Activated CD4-positive, alpha-beta memory T cell treated with anti-CD3 and anti-CD28 coated beads, Interleukin-2, amount 10 ng/mL, durations not matched to agents 7 days and 5 days (primary cell): ENCODE measurements at regions of chr20 and their contacts with region 1.

Region 1: DNA sequence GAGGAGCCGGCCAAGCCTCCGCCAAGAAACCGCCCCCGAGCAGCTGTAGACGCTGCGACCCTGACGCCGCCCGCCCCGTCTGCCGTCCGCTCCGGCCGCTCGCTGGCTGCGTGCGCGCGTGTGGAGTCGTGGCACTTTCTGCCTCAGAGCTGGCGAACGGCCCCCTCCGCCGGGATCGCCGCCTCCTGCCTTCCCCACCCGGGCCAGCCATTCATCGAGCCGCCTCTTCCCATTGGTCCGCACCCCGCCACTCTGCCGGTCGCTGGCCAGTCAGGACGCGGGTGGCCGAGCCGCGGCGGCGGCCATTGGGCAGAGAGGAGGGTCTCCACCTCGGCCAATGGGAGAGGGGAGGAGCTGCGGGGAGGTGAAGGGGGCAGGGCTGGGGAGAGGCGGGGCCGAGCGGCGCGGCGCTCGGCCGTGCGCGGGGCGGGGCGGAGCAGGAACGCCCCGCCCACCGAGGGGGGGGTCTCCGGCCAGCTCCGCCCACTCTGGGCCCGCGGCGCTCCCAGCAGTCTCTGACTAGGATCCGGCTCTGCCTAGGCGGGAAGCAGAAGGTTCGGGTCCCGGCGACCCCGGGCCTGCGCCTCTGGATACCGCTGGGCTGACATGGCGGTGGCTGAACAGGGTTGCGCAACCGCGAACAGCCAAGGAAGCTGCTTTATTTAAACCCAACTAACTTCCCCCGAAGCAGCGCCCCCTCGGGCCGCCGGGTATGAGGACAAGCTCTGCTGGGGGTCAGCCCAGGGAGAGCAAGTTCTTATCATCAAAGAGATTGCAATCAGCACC is at the start of gene RRBP1:
- DNase-seq: peak; percentile 98
- H3K4me3 Mint-ChIP-seq: peak within 1 kb of the TSS; percentile 84
- H3K27ac Mint-ChIP-seq: peak within 1 kb of the TSS; percentile 83
- H3K4me1 Mint-ChIP-seq: peaks cover 34% of the 10 kb centered on the region
- H3K27me3 Mint-ChIP-seq: peaks cover 41% of the 10 kb centered on the region
- total RNA-seq, gene RRBP1: 82.3 to 85.7 TPM

Region 2: DNA sequence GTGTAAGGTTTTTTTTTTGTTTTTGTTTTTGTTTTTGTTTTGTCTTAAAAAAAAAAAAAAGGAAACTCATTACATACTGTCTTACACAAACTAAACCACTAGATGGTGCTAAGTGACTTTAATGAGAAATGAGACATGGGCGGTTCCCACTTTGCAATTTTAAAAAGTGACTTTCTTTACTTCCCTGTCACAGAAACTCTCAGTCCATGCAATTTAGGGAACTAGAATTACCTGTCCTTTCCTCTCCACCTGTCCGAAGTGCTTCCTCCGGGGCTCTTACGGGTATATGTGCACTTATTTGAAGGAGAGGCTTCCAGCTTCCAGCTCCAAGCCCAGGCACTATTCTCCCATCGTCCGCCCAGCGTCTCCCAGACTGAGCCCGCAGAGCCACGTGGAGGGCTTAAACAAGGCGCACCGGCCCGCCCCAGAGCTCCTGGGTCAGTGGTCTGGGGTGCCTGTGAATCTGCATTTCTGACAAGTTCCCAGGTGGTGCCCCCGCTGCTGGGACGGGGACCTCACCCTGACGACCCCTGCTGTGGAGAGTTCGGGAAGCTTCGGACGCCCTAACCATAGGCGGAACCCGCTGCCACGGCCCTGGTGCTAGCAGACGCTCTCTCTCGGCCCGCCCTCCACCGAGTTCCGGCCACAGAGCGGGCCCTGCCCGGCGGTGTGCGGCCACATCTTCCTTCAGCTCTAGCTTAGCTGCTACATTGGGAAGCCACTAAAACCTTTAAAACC is 177.2 kb before region 1 on chr20:
- CTCF ChIA-PET with region 1: interaction called, 29 read pairs
- POLR2A ChIA-PET with region 1: interaction called, 22 read pairs
- DNase-seq: no peak
- H3K4me3 Mint-ChIP-seq: peak overlapping the region; percentile 79
- H3K27ac Mint-ChIP-seq: peak overlapping the region; percentile 93
- H3K4me1 Mint-ChIP-seq: peaks cover 69% of the 10 kb centered on the region
- H3K27me3 Mint-ChIP-seq: peaks cover 7% of the 10 kb centered on the region

Region 3: GRCh38 chr20:17569616-17570346 is 112.5 kb before region 1 on chr20 and contains the start of gene DSTN:
- CTCF ChIA-PET with region 1: interaction called, 28 read pairs
- POLR2A ChIA-PET with region 1: interaction called, 20 read pairs
- DNase-seq: peak; percentile 90
- H3K4me3 Mint-ChIP-seq: peak within 1 kb of the TSS; percentile 85
- H3K27ac Mint-ChIP-seq: peak within 1 kb of the TSS; percentile 83
- H3K4me1 Mint-ChIP-seq: peaks cover 33% of the 10 kb centered on the region
- H3K27me3 Mint-ChIP-seq: peaks cover 16% of the 10 kb centered on the region
- total RNA-seq, gene DSTN: 104 to 109 TPM

Region 4: GRCh38 chr20:17666481-17666880 is 15.8 kb before region 1 on chr20:
- CTCF ChIA-PET with region 1: interaction called, 29 read pairs
- POLR2A ChIA-PET with region 1: interaction called, 5 read pairs
- DNase-seq: no peak
- H3K4me3 Mint-ChIP-seq: no peak overlapping the region
- H3K27ac Mint-ChIP-seq: no peak overlapping the region
- H3K4me1 Mint-ChIP-seq: peaks cover 52% of the 10 kb centered on the region
- H3K27me3 Mint-ChIP-seq: no peaks in the 10 kb centered on the region

Region 5: GRCh38 chr20:17856024-17856564 is 173.8 kb after region 1 on chr20:
- CTCF ChIA-PET with region 1: interaction called, 14 read pairs
- POLR2A ChIA-PET with region 1: interaction called, 5 read pairs
- DNase-seq: peak; percentile 36
- H3K4me3 Mint-ChIP-seq: no peak overlapping the region
- H3K27ac Mint-ChIP-seq: peak overlapping the region; percentile 71
- H3K4me1 Mint-ChIP-seq: peaks cover 53% of the 10 kb centered on the region
- H3K27me3 Mint-ChIP-seq: peaks cover 14% of the 10 kb centered on the region

Region 6: GRCh38 chr20:17968366-17969279 is 286.3 kb after region 1 on chr20 and contains the starts of genes MGME1 and SNX5:
- CTCF ChIA-PET with region 1: interaction called, 12 read pairs
- POLR2A ChIA-PET with region 1: interaction called, 39 read pairs
- DNase-seq: peak; percentile 100
- H3K4me3 Mint-ChIP-seq: peak within 1 kb of the TSS; percentile 97
- H3K27ac Mint-ChIP-seq: peak within 1 kb of the TSS; percentile 98
- H3K4me1 Mint-ChIP-seq: peaks cover 34% of the 10 kb centered on the region
- H3K27me3 Mint-ChIP-seq: no peaks in the 10 kb centered on the region
- total RNA-seq, gene MGME1: 53.9 to 56.7 TPM
- total RNA-seq, gene SNX5: 236 to 250 TPM

Region 7: GRCh38 chr20:18507218-18508021 is 825.1 kb after region 1 on chr20 and contains the start of gene SEC23B:
- CTCF ChIA-PET with region 1: no interaction called
- POLR2A ChIA-PET with region 1: interaction called, 10 read pairs
- DNase-seq: peak; percentile 98
- H3K4me3 Mint-ChIP-seq: peak within 1 kb of the TSS; percentile 99
- H3K27ac Mint-ChIP-seq: peak within 1 kb of the TSS; percentile 99
- H3K4me1 Mint-ChIP-seq: peaks cover 53% of the 10 kb centered on the region
- H3K27me3 Mint-ChIP-seq: no peaks in the 10 kb centered on the region
- total RNA-seq, gene SEC23B: 95.2 to 101 TPM